Posterior vena cava (tissue), 2 donors: ENCODE measurements at regions of chr11 and their contacts with region 1.

Region 1: GRCh38 chr11:6531267-6531752 is 34.2 kb downstream of the DNHD1 start:
- DNase-seq: no peak

Region 2: GRCh38 chr11:6094186-6094585 is 437.1 kb before region 1 on chr11:
- intact Hi-C with region 1: no loop called
- DNase-seq: no peak

Region 3: GRCh38 chr11:6596239-6596877 is 65.0 kb after region 1 on chr11:
- intact Hi-C with region 1: loop called in 1 of 2 experiments (anchors 2 kb)
- DNase-seq: no peak

Region 4: DNA sequence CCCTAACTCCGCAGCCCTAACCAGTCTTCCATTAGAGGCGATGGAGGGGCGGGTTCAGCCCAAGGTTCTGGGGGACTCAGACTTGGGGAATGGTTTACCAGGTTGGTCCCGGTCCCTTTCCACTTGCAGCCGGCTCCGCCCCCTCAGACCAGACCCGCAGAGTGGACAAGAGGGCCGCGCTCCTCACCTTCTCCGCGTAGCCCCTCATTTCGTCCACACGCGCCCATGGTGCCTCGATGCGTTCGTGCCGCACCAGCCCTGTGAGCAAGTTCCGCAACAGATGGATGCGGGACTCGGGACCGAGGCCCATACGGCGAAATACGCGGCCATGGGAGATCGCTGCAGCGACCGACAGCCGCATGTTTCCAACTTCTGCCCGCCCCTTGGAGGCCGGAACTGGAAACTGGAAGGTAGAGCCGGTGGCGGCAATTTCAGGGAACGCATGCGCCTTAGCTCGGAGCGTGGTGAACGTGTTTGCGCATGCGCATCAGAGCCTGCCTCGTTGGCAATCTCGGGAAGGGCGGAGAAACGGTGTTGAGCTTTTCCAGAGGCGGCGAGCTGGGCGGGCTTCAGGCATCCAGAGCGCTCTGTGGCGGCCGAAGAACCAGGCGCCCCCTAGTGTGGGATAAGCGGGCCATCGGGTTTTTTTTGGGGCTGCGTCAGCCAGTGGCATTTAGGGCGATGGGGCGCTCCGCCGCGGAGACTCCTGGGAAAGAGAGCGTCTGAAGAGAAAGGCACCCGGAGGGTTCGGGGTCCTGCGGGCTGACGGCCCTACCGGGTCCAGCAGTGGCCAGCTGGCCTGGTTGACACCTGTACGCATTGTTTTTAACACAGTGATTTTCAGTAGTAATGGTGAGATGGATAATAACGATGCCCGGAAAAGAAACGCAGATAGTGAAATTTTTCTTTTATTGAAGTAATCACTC is 151.9 kb after region 1 on chr11 and contains the start of gene MRPL17:
- intact Hi-C with region 1: loop called (anchors 10 kb)
- DNase-seq: peak; percentile 100
- total RNA-seq, gene MRPL17: 25.6 to 28.2 TPM

Region 5: GRCh38 chr11:8040261-8040920 is 1509.1 kb after region 1 on chr11:
- intact Hi-C with region 1: no loop called
- DNase-seq: no peak